B cell (primary cell): ENCODE measurements at regions of chr13 and their contacts with region 1.

Region 1: GRCh38 chr13:48769107-48769704 is 115.5 kb downstream of the CYSLTR2 start:
- DNase-seq: peak; percentile 87
- ATAC-seq: peak; percentile 100
- H3K4me3 ChIP-seq: no peak overlapping the region
- H3K4me3 Mint-ChIP-seq: no peak overlapping the region
- H3K27ac ChIP-seq: no peak overlapping the region
- H3K27ac Mint-ChIP-seq: no peak overlapping the region
- H3K4me1 ChIP-seq: peaks cover 0 to 2% of the 10 kb centered on the region in 2 donors
- H3K4me1 Mint-ChIP-seq: peaks cover 2% of the 10 kb centered on the region
- H3K27me3 ChIP-seq: no peaks in the 10 kb centered on the region
- H3K27me3 Mint-ChIP-seq: peaks cover 40% of the 10 kb centered on the region
- CTCF ChIP-seq: peak; percentile 99

Region 2: GRCh38 chr13:46893798-46894560 is 1875.2 kb before region 1 on chr13:
- CTCF ChIA-PET with region 1: interaction called, 12 read pairs
- POLR2A ChIA-PET with region 1: no interaction called
- intact Hi-C with region 1: loop called (anchors 5 kb)
- DNase-seq: peak; percentile 80
- ATAC-seq: peak; percentile 94
- H3K4me3 ChIP-seq: peak overlapping the region; percentile 36 to 72 (median 53)
- H3K4me3 Mint-ChIP-seq: peak overlapping the region; percentile 79
- H3K27ac ChIP-seq: no peak overlapping the region
- H3K27ac Mint-ChIP-seq: no peak overlapping the region
- H3K4me1 ChIP-seq: peaks cover 15 to 23% of the 10 kb centered on the region in 2 donors
- H3K4me1 Mint-ChIP-seq: peaks cover 22% of the 10 kb centered on the region
- H3K27me3 ChIP-seq: peaks cover 0 to 25% (median 5%) of the 10 kb centered on the region in 4 experiments
- H3K27me3 Mint-ChIP-seq: peaks cover 65% of the 10 kb centered on the region
- CTCF ChIP-seq: peak; percentile 95

Region 3: GRCh38 chr13:48078251-48078656 is 691.0 kb before region 1 on chr13:
- CTCF ChIA-PET with region 1: interaction called, 21 read pairs
- POLR2A ChIA-PET with region 1: no interaction called
- intact Hi-C with region 1: loop called (anchors 1 kb)
- DNase-seq: peak; percentile 81
- ATAC-seq: peak; percentile 99
- H3K4me3 ChIP-seq: no peak overlapping the region
- H3K4me3 Mint-ChIP-seq: no peak overlapping the region
- H3K27ac ChIP-seq: peak overlapping the region in 1 of 2 donors; percentile 55
- H3K27ac Mint-ChIP-seq: peak overlapping the region; percentile 1
- H3K4me1 ChIP-seq: peaks cover 5 to 6% of the 10 kb centered on the region in 2 donors
- H3K4me1 Mint-ChIP-seq: peaks cover 9% of the 10 kb centered on the region
- H3K27me3 ChIP-seq: no peaks in the 10 kb centered on the region
- H3K27me3 Mint-ChIP-seq: no peaks in the 10 kb centered on the region
- CTCF ChIP-seq: peak; percentile 74

Region 4: DNA sequence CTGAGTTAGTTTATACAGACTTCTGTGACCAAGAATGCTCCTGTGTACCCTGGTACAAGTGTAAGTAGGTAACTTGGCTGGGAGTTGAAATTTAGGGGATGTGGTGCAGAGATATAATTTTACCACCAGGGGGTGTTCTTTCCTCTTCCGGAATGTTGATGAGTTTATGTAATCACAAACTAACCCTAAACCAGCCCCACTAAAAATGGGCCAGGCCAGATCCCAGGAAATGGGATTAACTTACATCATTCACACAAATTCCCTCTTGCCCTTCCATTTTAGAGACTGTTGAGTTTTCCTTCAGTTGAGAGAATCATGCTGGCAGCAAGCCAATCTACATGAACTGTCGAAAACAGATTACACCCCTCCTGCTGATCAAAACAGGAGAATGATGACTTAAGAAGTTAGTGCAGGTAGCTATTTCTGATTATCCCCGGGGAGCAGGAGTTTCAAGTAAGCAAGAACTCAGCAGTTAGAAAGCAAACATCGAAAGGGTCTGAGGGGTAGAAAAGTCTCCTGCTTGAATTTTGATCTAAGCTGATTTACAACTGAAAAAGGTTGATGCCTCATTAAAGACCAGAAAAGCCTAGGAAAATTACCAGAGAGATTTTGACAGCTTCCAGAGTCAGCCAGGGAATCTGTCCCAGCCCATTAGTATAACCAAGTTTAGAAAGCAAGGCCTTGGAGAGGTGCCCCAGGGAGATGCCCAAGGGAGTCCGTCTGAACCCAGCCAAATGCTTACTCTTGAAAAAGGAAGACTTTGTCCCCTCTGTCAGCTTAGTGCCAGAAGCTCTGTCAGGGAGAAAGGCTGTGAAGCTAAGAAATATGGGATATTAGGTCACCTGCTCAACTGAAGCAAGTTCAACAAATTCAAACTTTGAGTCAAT is 642.0 kb before region 1 on chr13:
- CTCF ChIA-PET with region 1: interaction called, 27 read pairs
- POLR2A ChIA-PET with region 1: interaction called, 5 read pairs
- intact Hi-C with region 1: no loop called
- DNase-seq: peak; percentile 81
- ATAC-seq: peak; percentile 81
- H3K4me3 ChIP-seq: no peak overlapping the region
- H3K4me3 Mint-ChIP-seq: peak overlapping the region; percentile 3
- H3K27ac ChIP-seq: no peak overlapping the region
- H3K27ac Mint-ChIP-seq: no peak overlapping the region
- H3K4me1 ChIP-seq: peaks cover 10 to 12% of the 10 kb centered on the region in 2 donors
- H3K4me1 Mint-ChIP-seq: peaks cover 7% of the 10 kb centered on the region
- H3K27me3 ChIP-seq: no peaks in the 10 kb centered on the region
- H3K27me3 Mint-ChIP-seq: peaks cover 7% of the 10 kb centered on the region
- CTCF ChIP-seq: peak; percentile 82

Region 5: GRCh38 chr13:48526286-48526685 is 242.9 kb before region 1 on chr13:
- CTCF ChIA-PET with region 1: no interaction called
- POLR2A ChIA-PET with region 1: no interaction called
- intact Hi-C with region 1: no loop called
- DNase-seq: no peak
- ATAC-seq: no peak
- H3K4me3 ChIP-seq: no peak overlapping the region
- H3K4me3 Mint-ChIP-seq: no peak overlapping the region
- H3K27ac ChIP-seq: no peak overlapping the region
- H3K27ac Mint-ChIP-seq: no peak overlapping the region
- H3K4me1 ChIP-seq: peaks cover 6 to 7% of the 10 kb centered on the region in 2 donors
- H3K4me1 Mint-ChIP-seq: peaks cover 7% of the 10 kb centered on the region
- H3K27me3 ChIP-seq: peaks cover 0 to 6% (median 0%) of the 10 kb centered on the region in 4 experiments
- H3K27me3 Mint-ChIP-seq: peaks cover 8% of the 10 kb centered on the region
- CTCF ChIP-seq: no peak

Region 6: GRCh38 chr13:48595431-48596429 is 173.5 kb before region 1 on chr13:
- CTCF ChIA-PET with region 1: interaction called, 3 read pairs
- POLR2A ChIA-PET with region 1: no interaction called
- intact Hi-C with region 1: loop called (anchors 5 kb)
- DNase-seq: no peak
- ATAC-seq: no peak
- H3K4me3 ChIP-seq: no peak overlapping the region
- H3K4me3 Mint-ChIP-seq: no peak overlapping the region
- H3K27ac ChIP-seq: no peak overlapping the region
- H3K27ac Mint-ChIP-seq: no peak overlapping the region
- H3K4me1 ChIP-seq: no peaks in the 10 kb centered on the region
- H3K4me1 Mint-ChIP-seq: no peaks in the 10 kb centered on the region
- H3K27me3 ChIP-seq: peaks cover 0 to 6% (median 2%) of the 10 kb centered on the region in 4 experiments
- H3K27me3 Mint-ChIP-seq: peaks cover 33% of the 10 kb centered on the region
- CTCF ChIP-seq: peak; percentile 28

Region 7: GRCh38 chr13:48679911-48680680 is 89.1 kb before region 1 on chr13:
- CTCF ChIA-PET with region 1: no interaction called
- POLR2A ChIA-PET with region 1: no interaction called
- intact Hi-C with region 1: no loop called
- DNase-seq: no peak
- ATAC-seq: no peak
- H3K4me3 ChIP-seq: no peak overlapping the region
- H3K4me3 Mint-ChIP-seq: no peak overlapping the region
- H3K27ac ChIP-seq: no peak overlapping the region
- H3K27ac Mint-ChIP-seq: no peak overlapping the region
- H3K4me1 ChIP-seq: no peaks in the 10 kb centered on the region
- H3K4me1 Mint-ChIP-seq: no peaks in the 10 kb centered on the region
- H3K27me3 ChIP-seq: no peaks in the 10 kb centered on the region
- H3K27me3 Mint-ChIP-seq: peaks cover 26% of the 10 kb centered on the region
- CTCF ChIP-seq: no peak